Panc1 (cell line): ENCODE measurements at regions of chr12 and their contacts with region 1.

Region 1: GRCh38 chr12:108950991-108951739 is 69.7 kb downstream of the SVOP start:
- DNase-seq: peak; percentile 41
- ATAC-seq: peak; percentile 86
- H3K4me3 ChIP-seq: peak overlapping the region in 1 of 2 experiments; percentile 36; a peak in 1 of 4 replicates
- H3K27ac ChIP-seq: no peak overlapping the region
- H3K4me1 ChIP-seq: peaks cover 4% of the 10 kb centered on the region; the same call in 1 of the 2 replicates
- H3K27me3 ChIP-seq: 0 out of 2 replicates have a peak, but pooled peaks cover 2% of the 10 kb centered on the region
- CTCF ChIP-seq: peak; percentile 95

Region 2: DNA sequence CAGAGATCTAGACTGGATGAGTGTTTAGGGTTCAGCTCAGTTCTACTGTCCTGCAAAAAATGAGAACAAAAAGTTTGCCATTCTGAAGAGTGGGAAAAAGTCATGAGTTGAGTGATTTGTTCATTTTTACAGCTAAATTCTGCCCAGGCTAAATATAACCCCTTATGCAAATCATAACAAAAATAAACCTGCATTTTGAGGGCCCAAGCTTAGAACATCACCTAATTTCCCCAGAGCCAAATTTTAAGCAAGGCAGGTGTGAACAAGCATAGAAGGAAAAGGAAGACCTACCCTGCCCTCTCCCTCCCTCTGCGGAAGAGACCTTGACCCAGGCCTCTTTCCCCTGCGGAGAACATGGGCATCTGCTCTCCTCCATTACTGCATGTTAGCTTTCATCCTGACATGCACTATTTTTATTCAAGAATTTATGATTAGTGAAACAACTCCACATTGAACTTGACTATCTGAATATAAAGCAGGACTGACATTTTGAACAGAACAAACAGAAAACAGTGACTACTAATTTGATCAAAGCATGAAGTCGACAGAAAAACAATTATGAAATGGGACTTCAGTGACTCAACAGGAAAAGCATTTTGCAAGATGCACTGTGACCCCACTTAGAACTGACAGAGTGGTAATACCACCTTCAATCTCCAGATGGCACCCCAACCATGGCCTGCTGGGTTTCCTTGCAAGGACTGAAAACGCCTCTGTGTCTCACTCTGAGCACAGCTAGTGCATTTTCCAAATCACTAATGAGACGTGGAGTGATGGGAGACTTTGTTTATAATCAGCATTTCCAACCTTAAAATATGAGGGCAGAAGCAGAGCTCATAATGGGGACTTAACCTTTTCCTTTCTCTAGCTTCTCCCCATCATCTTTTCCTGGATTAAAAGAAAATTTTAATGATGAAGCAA is 286.6 kb before region 1 on chr12:
- CTCF ChIA-PET with region 1: interaction called, 8 read pairs
- POLR2A ChIA-PET with region 1: no interaction called
- in situ Hi-C with region 1: no loop called
- intact Hi-C with region 1: loop called (anchors 10 kb)
- DNase-seq: peak; percentile 89
- ATAC-seq: peak; percentile 95
- H3K4me3 ChIP-seq: no peak overlapping the region
- H3K27ac ChIP-seq: peak overlapping the region; percentile 75
- H3K4me1 ChIP-seq: peaks cover 17% of the 10 kb centered on the region
- H3K27me3 ChIP-seq: no peaks in the 10 kb centered on the region
- CTCF ChIP-seq: peak; percentile 95

Region 3: DNA sequence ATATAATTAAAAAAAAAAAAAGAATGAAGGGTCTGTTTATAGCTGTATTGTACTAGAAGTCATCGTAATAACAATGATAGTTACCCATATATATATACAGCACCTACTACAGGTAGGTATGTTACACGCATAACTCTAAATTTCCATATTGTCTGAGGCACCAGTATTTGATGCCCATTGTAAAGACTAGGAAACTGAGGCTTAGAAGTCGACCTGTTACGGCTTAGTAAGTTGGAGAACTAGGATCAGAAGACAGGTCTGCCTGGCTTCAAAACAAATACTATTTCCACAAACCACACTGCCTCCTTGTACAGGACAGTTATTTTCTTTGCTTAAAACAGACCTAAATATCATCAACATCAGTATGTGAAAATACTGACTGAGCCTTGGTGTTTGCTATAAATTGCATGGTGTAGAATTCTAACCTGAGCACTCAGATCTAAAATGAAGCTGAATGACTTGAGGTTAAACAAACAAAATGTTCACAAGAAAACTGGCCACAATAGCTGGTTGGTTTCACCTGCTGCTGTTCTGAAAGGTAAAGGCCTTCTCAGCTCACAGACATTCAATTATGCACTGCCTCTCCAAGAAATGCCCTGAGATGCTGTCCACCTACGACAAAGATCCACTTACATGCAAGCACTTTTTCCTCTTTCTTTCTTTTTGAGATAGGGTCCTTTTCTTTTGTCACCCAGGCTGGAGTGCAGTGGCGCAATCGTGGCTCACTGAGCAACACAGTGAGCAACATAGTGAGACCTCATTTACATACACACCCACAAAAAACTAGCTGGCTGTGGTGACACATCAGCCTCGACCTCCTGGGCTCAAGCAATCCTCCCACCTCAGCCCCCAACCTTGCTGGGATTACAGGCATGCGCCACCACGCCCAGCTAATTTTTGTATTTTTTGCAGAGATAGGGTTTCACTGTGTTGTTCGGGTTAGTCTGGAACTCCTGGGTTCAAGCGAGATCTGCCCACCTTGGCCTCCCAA is 129.5 kb before region 1 on chr12:
- CTCF ChIA-PET with region 1: interaction called, 16 read pairs
- POLR2A ChIA-PET with region 1: interaction called, 7 read pairs
- in situ Hi-C with region 1: no loop called
- intact Hi-C with region 1: no loop called
- DNase-seq: no peak
- ATAC-seq: no peak
- H3K4me3 ChIP-seq: no peak overlapping the region
- H3K27ac ChIP-seq: no peak overlapping the region; the same call in 1 of the 2 replicates
- H3K4me1 ChIP-seq: peaks cover 37% of the 10 kb centered on the region
- H3K27me3 ChIP-seq: no peaks in the 10 kb centered on the region
- CTCF ChIP-seq: no peak

Region 4: DNA sequence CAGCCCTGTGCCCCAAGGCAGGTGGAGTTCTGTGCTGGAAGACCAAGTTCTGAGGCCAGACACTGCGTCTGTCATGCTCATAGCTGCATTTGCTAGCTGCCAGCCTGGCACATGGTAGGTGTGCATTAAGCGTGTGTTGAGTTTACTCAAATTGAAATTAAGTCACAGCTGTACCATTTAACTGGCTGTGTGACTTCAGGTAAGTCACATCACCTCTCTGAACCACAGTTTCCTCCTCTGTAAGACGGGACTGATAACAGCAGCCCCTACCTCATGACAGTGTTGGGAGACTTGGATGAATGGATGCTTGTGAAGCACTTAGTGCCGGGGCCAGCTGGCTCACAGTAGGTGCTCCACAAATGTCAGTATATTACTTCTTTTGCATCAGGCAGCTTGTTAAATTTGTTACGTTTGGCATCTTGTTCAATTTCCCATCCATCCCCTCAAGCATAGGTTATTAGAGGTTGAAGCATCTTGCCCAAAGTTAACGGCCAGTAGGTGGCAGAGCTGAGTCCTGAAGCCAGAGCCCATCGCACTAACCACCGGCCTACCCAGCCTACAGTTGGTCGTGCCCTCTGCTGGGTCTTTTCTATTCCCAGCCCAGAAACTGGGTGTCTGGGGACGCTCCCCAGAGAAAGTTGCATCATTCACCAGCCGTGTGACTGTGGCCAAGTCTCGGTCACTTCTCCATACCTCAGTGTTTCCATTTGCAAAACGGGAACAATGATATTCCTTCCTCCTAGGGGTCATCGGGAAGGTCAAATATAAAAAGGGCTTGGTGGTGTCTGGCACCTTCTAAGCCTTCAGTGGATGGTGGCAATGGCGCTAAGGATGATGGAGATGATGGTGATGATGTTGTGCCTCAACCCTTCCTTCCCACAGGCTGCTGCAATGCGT is 66.8 kb before region 1 on chr12:
- CTCF ChIA-PET with region 1: interaction called, 6 read pairs
- POLR2A ChIA-PET with region 1: interaction called, 3 read pairs
- in situ Hi-C with region 1: no loop called
- intact Hi-C with region 1: loop called (anchors 1 kb)
- DNase-seq: peak; percentile 12
- ATAC-seq: peak; percentile 72
- H3K4me3 ChIP-seq: no peak overlapping the region
- H3K27ac ChIP-seq: no peak overlapping the region
- H3K4me1 ChIP-seq: no peaks in the 10 kb centered on the region
- H3K27me3 ChIP-seq: no peaks in the 10 kb centered on the region
- CTCF ChIP-seq: peak; percentile 85

Region 5: DNA sequence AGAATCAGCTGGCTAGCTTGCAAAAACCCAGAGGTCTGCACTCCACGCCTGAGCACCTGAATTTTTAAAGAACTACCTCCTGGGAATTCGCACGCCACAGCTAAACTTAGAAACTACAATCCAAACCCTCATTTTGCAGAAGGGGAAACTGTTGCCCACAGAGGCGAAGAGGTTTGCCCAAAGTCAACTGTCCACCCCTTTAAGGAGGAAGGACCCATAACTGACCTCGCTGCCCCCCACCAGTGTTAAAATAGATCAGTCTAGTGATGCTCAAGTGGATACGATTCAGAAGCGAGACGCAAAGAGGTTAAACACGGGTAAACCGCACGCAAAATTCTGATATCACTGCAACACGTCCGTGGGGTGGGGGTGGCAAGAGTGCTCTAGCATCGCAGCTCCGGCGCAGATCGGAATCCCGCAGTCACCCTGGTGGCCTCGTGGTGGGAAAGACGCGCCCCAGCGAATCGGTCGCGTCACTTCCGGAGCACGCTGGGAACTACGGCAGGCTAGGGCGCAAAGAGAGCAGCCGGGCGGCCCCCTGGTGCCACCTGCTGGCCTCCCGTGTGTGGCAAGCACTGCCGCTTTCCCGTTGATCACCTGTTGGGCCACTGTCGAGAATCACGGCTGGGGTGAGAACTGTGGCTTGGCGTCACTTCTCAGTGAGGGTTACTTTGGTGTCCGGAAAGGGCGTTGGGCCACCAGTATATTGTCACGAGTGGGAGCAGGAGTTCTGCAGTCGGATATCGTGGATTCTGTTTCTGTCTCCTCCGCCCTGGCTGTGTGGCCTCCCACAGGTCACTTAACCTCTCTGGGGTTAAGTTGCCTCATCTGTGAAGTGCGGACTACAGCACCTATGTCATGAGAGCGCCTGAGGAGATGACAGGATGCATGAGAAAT is 142.1 kb after region 1 on chr12 and contains the start of gene ALKBH2:
- CTCF ChIA-PET with region 1: no interaction called
- POLR2A ChIA-PET with region 1: interaction called, 3 read pairs
- in situ Hi-C with region 1: no loop called
- intact Hi-C with region 1: loop called (anchors 10 kb)
- DNase-seq: peak; percentile 69
- ATAC-seq: peak; percentile 81
- H3K4me3 ChIP-seq: peak within 1 kb of the TSS; percentile 64 to 85
- H3K27ac ChIP-seq: peak within 1 kb of the TSS; percentile 97
- H3K4me1 ChIP-seq: peaks cover 18% of the 10 kb centered on the region
- H3K27me3 ChIP-seq: no peaks in the 10 kb centered on the region
- CTCF ChIP-seq: peak; percentile 99
- total RNA-seq, gene ALKBH2: 41.6 TPM

Region 6: DNA sequence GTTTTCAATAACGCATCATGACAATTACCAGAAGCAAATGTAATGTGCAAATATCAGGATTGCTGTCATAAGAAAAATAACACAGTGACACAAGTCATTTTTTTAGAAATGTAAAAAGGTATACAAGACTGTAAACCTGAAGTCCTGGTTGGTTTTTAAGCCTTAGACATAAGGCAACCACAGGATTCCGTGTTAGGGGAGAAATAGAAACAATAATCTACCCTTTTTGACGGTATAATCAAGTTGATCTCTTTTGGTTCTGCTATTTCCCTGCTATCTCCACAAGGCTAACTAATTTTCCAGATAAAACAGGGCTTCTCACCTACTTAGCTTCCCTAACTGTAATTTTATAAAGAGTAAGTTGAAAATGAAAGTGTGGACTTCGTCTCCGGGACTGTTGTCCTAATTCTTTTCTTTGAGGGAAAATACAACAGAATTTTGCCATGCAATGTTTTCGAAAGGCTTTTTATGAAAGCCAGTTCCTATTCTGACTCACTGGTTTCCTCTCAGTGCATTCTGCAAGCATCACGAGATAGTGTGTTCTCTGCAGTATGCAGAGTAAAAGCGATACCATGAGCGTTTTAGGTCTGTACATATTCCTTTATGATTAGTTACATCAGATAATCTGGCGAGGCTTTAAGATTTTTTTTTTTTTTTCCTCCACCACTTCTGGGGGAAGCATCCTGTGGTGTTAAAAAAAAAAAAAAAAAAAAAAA is 407.1 kb after region 1 on chr12:
- CTCF ChIA-PET with region 1: no interaction called
- POLR2A ChIA-PET with region 1: no interaction called
- in situ Hi-C with region 1: no loop called
- intact Hi-C with region 1: no loop called
- DNase-seq: no peak
- ATAC-seq: no peak
- H3K4me3 ChIP-seq: peak overlapping the region; percentile 1 to 21; a peak in 3 of 4 replicates
- H3K27ac ChIP-seq: no peak overlapping the region
- H3K4me1 ChIP-seq: no peaks in the 10 kb centered on the region
- H3K27me3 ChIP-seq: peaks cover 17% of the 10 kb centered on the region
- CTCF ChIP-seq: no peak